CD8-positive, alpha-beta T cell (primary cell): ENCODE measurements at regions of chr19 and their contacts with region 1.

Region 1: GRCh38 chr19:58154679-58155648 is 4.4 kb upstream of the ZNF329 start:
- DNase-seq: peak; percentile 94 to 100 (median 99)
- ATAC-seq: peak; percentile 85
- H3K4me3 ChIP-seq: peak overlapping the region; percentile 69 to 99
- H3K4me3 Mint-ChIP-seq: peak overlapping the region; percentile 87
- H3K27ac ChIP-seq: peak overlapping the region; percentile 76 to 94
- H3K27ac Mint-ChIP-seq: peak overlapping the region; percentile 82
- H3K4me1 ChIP-seq: peaks cover 17% of the 10 kb centered on the region
- H3K4me1 Mint-ChIP-seq: peaks cover 25% of the 10 kb centered on the region
- H3K27me3 ChIP-seq: no peaks in the 10 kb centered on the region
- H3K27me3 Mint-ChIP-seq: no peaks in the 10 kb centered on the region
- CTCF ChIP-seq: peak; percentile 98

Region 2: GRCh38 chr19:56403764-56404704 is 1750.9 kb before region 1 on chr19 and contains the start of gene ZNF583:
- CTCF ChIA-PET with region 1: no interaction called
- POLR2A ChIA-PET with region 1: no interaction called
- intact Hi-C with region 1: loop called (anchors 1 to 10 kb)
- DNase-seq: peak; percentile 83 to 95 (median 91)
- ATAC-seq: peak; percentile 82
- H3K4me3 ChIP-seq: peak within 1 kb of the TSS; percentile 80 to 93
- H3K4me3 Mint-ChIP-seq: peak within 1 kb of the TSS; percentile 85
- H3K27ac ChIP-seq: peak within 1 kb of the TSS; percentile 83 to 99
- H3K27ac Mint-ChIP-seq: peak within 1 kb of the TSS; percentile 88
- H3K4me1 ChIP-seq: peaks cover 18% of the 10 kb centered on the region
- H3K4me1 Mint-ChIP-seq: peaks cover 32% of the 10 kb centered on the region
- H3K27me3 ChIP-seq: no peaks in the 10 kb centered on the region
- H3K27me3 Mint-ChIP-seq: no peaks in the 10 kb centered on the region
- CTCF ChIP-seq: no peak
- total RNA-seq, gene ZNF583: 1.3 to 2.4 TPM

Region 3: DNA sequence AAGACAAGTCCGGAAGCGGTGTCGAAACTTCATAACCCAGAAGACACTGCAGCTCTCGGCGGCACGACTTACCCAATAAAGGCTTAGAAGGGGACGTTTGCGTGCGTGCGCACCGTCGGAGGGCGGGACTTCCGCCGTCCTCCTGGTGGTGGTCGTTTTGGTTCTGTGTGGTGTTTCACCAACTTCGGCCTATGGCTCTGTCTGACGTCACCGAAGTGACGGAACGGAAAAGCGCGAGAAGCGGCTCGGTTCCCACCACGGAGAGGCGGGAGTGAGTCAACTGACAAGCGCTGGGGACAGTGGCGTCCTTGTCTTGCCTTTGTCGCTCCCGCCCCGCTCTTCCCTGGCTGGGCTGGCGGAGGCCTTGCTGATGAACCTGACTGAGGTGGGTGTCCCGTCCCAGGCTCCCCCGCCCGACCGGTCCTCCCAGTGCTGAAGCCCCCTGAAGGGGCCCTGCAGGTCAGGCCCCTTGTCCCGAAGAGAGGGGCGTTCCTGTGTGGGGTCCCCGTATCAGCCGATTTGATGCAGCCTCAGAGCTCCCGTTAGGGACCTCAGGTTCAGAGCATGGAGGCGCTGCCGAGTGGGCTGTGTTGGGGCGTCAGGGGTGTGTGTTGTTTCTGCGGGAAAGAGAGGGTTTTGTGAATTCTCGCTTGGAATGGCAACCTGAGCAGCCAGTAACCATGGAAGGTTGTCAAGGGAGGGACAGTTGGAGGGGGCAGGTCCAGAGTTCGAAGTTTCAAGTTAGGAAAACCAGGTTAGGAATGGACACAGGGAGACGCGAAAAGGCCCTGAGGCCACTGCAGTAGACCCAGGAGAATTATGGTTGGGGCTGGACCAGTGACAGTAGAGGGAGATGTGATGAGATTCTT is 765.0 kb before region 1 on chr19 and contains the start of gene ZNF548:
- CTCF ChIA-PET with region 1: no interaction called
- POLR2A ChIA-PET with region 1: no interaction called
- intact Hi-C with region 1: loop called (anchors 1 kb)
- DNase-seq: peak; percentile 93 to 100 (median 98)
- ATAC-seq: peak; percentile 95
- H3K4me3 ChIP-seq: peak within 1 kb of the TSS; percentile 79 to 93
- H3K4me3 Mint-ChIP-seq: peak within 1 kb of the TSS; percentile 95
- H3K27ac ChIP-seq: peak within 1 kb of the TSS; percentile 92 to 98
- H3K27ac Mint-ChIP-seq: peak within 1 kb of the TSS; percentile 97
- H3K4me1 ChIP-seq: peaks cover 19% of the 10 kb centered on the region
- H3K4me1 Mint-ChIP-seq: peaks cover 43% of the 10 kb centered on the region
- H3K27me3 ChIP-seq: no peaks in the 10 kb centered on the region
- H3K27me3 Mint-ChIP-seq: no peaks in the 10 kb centered on the region
- CTCF ChIP-seq: no peak
- total RNA-seq, gene ZNF548: 75.4 to 79.1 TPM

Region 4: GRCh38 chr19:57578487-57579205 is 576.3 kb before region 1 on chr19 and contains the start of gene ZNF416:
- CTCF ChIA-PET with region 1: no interaction called
- POLR2A ChIA-PET with region 1: interaction called, 4 read pairs
- intact Hi-C with region 1: loop called (anchors 1 to 2 kb)
- DNase-seq: peak; percentile 91 to 99 (median 94)
- ATAC-seq: peak; percentile 95
- H3K4me3 ChIP-seq: peak within 1 kb of the TSS; percentile 74 to 84
- H3K4me3 Mint-ChIP-seq: peak within 1 kb of the TSS; percentile 85
- H3K27ac ChIP-seq: peak within 1 kb of the TSS; percentile 55 to 65
- H3K27ac Mint-ChIP-seq: peak within 1 kb of the TSS; percentile 81
- H3K4me1 ChIP-seq: peaks cover 25% of the 10 kb centered on the region
- H3K4me1 Mint-ChIP-seq: peaks cover 25% of the 10 kb centered on the region
- H3K27me3 ChIP-seq: no peaks in the 10 kb centered on the region
- H3K27me3 Mint-ChIP-seq: no peaks in the 10 kb centered on the region
- CTCF ChIP-seq: no peak
- total RNA-seq, gene ZNF416: 7.7 to 8.2 TPM

Region 5: DNA sequence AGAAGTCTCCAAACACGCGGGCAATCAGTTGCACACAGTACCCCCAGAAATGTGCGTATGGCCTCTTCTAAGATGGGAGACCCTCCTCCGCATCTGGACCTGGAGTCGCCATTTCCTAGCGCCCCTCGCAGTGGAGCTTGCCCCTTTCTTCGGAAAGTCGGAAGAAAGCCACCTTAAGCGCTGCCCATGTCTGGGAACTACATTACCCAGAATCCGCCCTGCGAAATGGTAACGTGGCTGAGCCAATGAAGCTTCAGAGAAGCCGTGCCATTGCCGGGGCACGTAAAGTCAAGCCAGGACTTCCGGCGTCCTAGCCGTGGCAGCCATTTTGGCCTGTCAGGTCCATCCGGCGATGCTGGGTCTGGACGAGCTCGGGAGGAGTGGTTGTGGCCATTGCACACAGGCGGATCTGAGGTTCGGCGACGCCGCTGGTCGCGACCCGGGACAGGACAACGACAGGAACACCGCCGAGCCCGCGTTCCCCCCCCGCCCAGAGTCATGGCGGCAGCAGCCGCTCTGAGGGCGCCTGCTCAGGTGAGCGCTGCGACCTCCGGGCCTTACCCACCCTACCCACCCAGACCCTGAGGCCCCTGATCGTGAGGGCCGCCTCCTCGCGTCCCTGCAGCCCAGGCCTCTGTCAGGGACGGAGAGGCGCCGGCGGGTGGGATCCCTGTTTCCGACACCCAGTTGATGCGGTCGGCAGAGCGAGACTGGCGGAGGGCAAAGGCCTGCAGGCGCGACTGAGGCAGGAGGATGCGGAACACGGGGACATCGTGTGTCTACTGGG is 385.4 kb before region 1 on chr19 and contains the start of gene ZNF586:
- CTCF ChIA-PET with region 1: no interaction called
- POLR2A ChIA-PET with region 1: interaction called, 3 read pairs
- intact Hi-C with region 1: loop called in 1 of 2 experiments (anchors 1 kb)
- DNase-seq: peak; percentile 64 to 94 (median 86)
- ATAC-seq: peak; percentile 99
- H3K4me3 ChIP-seq: peak within 1 kb of the TSS; percentile 73 to 90
- H3K4me3 Mint-ChIP-seq: peak within 1 kb of the TSS; percentile 94
- H3K27ac ChIP-seq: peak within 1 kb of the TSS; percentile 61 to 86
- H3K27ac Mint-ChIP-seq: peak within 1 kb of the TSS; percentile 97
- H3K4me1 ChIP-seq: peaks cover 17% of the 10 kb centered on the region
- H3K4me1 Mint-ChIP-seq: peaks cover 35% of the 10 kb centered on the region
- H3K27me3 ChIP-seq: no peaks in the 10 kb centered on the region
- H3K27me3 Mint-ChIP-seq: no peaks in the 10 kb centered on the region
- CTCF ChIP-seq: no peak
- total RNA-seq, gene ZNF586: 54.0 to 57.6 TPM

Region 6: DNA sequence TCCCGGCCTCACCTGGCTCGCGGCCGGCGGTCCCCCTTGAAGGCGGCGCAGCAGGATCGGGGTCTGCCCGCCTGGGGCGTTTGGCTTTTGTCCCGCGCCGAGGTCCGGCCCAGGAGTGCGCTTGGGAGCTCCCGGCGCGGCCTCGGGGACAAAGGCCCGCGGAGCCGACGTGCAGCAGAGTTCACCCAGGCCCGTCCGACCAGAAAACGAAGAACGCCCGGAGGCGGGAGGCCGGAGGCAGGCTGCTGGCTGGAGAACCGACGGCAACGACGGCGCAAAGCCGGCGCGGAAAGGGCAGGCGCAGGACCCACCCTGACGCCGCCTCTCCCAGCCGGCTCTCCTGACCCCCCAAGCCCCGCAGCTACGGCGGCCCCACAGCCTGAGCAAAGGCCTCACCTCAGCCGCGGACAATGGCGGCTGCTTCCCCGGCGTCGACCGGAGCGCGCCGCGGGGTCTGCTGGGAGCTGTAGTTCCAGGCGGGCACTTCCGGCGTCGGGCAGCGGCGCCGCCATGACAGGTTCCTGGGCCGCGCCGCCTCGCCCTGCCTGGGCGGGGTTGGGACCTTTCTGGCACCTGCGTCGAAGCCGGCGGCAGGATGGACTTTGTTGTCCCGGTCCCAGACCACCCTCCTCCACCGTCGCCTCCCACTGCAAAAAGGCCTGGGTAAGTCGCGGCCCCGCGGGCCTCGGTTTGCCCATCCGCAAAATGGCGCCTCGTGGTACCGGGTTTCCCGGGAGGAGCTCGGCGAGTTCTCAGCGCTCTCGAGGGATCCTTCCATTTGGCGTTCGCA is 152.4 kb before region 1 on chr19 and contains the start of gene ZNF606:
- CTCF ChIA-PET with region 1: no interaction called
- POLR2A ChIA-PET with region 1: interaction called, 3 read pairs
- intact Hi-C with region 1: loop called (anchors 1 kb)
- DNase-seq: peak; percentile 72 to 93 (median 84)
- ATAC-seq: peak; percentile 94
- H3K4me3 ChIP-seq: peak within 1 kb of the TSS; percentile 90 to 93
- H3K4me3 Mint-ChIP-seq: peak within 1 kb of the TSS; percentile 87
- H3K27ac ChIP-seq: peak within 1 kb of the TSS; percentile 82 to 93
- H3K27ac Mint-ChIP-seq: peak within 1 kb of the TSS; percentile 94
- H3K4me1 ChIP-seq: peaks cover 20% of the 10 kb centered on the region
- H3K4me1 Mint-ChIP-seq: peaks cover 34% of the 10 kb centered on the region
- H3K27me3 ChIP-seq: no peaks in the 10 kb centered on the region
- H3K27me3 Mint-ChIP-seq: no peaks in the 10 kb centered on the region
- CTCF ChIP-seq: no peak
- total RNA-seq, gene ZNF606: 11.2 to 13.0 TPM

Region 7: GRCh38 chr19:58144467-58144866 is 10.5 kb before region 1 on chr19:
- CTCF ChIA-PET with region 1: no interaction called
- POLR2A ChIA-PET with region 1: no interaction called
- intact Hi-C with region 1: no loop called
- DNase-seq: no peak
- ATAC-seq: no peak
- H3K4me3 ChIP-seq: no peak overlapping the region
- H3K4me3 Mint-ChIP-seq: no peak overlapping the region
- H3K27ac ChIP-seq: no peak overlapping the region
- H3K27ac Mint-ChIP-seq: no peak overlapping the region
- H3K4me1 ChIP-seq: no peaks in the 10 kb centered on the region
- H3K4me1 Mint-ChIP-seq: peaks cover 6% of the 10 kb centered on the region
- H3K27me3 ChIP-seq: no peaks in the 10 kb centered on the region
- H3K27me3 Mint-ChIP-seq: no peaks in the 10 kb centered on the region
- CTCF ChIP-seq: no peak

Region 8: GRCh38 chr19:58305065-58305931 is 150.3 kb after region 1 on chr19 and contains the start of gene ERVK3-1:
- CTCF ChIA-PET with region 1: no interaction called
- POLR2A ChIA-PET with region 1: no interaction called
- intact Hi-C with region 1: loop called in 1 of 2 experiments (anchors 1 kb)
- DNase-seq: peak; percentile 89 to 99 (median 93)
- ATAC-seq: peak; percentile 96
- H3K4me3 ChIP-seq: peak within 1 kb of the TSS; percentile 82 to 89
- H3K4me3 Mint-ChIP-seq: peak within 1 kb of the TSS; percentile 98
- H3K27ac ChIP-seq: peak within 1 kb of the TSS; percentile 93 to 95
- H3K27ac Mint-ChIP-seq: peak within 1 kb of the TSS; percentile 99
- H3K4me1 ChIP-seq: peaks cover 27% of the 10 kb centered on the region
- H3K4me1 Mint-ChIP-seq: peaks cover 53% of the 10 kb centered on the region
- H3K27me3 ChIP-seq: no peaks in the 10 kb centered on the region
- H3K27me3 Mint-ChIP-seq: no peaks in the 10 kb centered on the region
- CTCF ChIP-seq: no peak
- total RNA-seq, gene ERVK3-1: 174 to 182 TPM